Endothelial cell of umbilical vein (primary cell): ENCODE measurements at regions of chr4 and their contacts with region 1.

Region 1: DNA sequence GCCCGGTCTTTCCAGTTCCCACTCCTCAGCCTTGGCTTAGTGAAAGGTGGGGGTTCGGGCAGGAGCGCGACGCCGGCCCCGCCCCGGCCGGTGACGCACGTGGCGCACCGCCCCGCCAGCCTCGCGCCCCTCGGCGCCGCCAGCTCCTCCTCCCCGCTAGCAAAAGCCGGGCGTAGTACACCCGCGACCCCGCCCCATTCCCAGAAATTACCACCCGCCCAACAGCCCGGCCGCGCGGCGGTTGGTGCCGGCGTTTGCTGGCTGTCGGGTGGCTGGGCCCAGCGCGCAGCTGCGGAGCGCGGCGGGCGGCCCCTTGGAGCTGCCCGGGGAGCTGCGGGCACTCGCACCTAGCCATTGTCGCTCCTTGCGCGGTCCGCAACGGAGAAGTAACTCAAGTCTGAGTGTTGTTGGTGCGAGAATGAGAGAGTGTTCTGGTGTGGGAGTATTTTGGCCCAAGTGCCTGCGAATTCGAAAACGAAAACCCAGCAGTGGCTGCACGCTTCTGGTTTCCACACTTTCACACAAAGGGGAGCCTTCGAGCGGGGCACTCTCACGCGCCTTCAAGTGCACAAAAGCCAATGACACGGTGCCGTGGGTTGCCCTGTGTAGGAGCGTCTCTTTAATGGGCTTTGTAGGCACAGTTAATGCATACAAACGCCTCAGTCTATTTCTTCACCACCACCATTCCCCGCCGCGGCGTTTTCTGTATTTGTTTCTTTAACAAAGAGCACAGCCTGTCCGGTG is 1.0 kb upstream of the ELF2 start:
- DNase-seq: peak; percentile 96
- H3K4me3 ChIP-seq: peak overlapping the region; percentile 83 to 93 (median 84)
- H3K27ac ChIP-seq: peak overlapping the region; percentile 75
- H3K4me1 ChIP-seq: peaks cover 7% of the 10 kb centered on the region
- H3K27me3 ChIP-seq: no peaks in the 10 kb centered on the region
- CTCF ChIP-seq: no peak
- POLR2A ChIP-seq: peak; percentile 75

Region 2: GRCh38 chr4:138938366-138938690 is 239.7 kb before region 1 on chr4:
- CTCF ChIA-PET with region 1: no interaction called
- POLR2A ChIA-PET with region 1: no interaction called
- dilution Hi-C with region 1: no loop called
- intact Hi-C with region 1: no loop called
- DNase-seq: peak; percentile 59
- H3K4me3 ChIP-seq: no peak overlapping the region
- H3K27ac ChIP-seq: no peak overlapping the region
- H3K4me1 ChIP-seq: no peaks in the 10 kb centered on the region
- H3K27me3 ChIP-seq: no peaks in the 10 kb centered on the region
- CTCF ChIP-seq: peak in 1 of 2 donors; percentile 28
- POLR2A ChIP-seq: no peak

Region 3: GRCh38 chr4:139050446-139050845 is 127.6 kb before region 1 on chr4:
- CTCF ChIA-PET with region 1: no interaction called
- POLR2A ChIA-PET with region 1: no interaction called
- dilution Hi-C with region 1: no loop called
- intact Hi-C with region 1: no loop called
- DNase-seq: no peak
- H3K4me3 ChIP-seq: no peak overlapping the region
- H3K27ac ChIP-seq: no peak overlapping the region
- H3K4me1 ChIP-seq: peaks cover 5% of the 10 kb centered on the region
- H3K27me3 ChIP-seq: no peaks in the 10 kb centered on the region
- CTCF ChIP-seq: no peak
- POLR2A ChIP-seq: no peak

Region 4: GRCh38 chr4:139083956-139084803 is 93.9 kb before region 1 on chr4:
- CTCF ChIA-PET with region 1: no interaction called
- POLR2A ChIA-PET with region 1: interaction called, 3 read pairs
- dilution Hi-C with region 1: no loop called
- intact Hi-C with region 1: loop called (anchors 1 kb)
- DNase-seq: peak; percentile 91
- H3K4me3 ChIP-seq: peak overlapping the region; percentile 65 to 100 (median 92)
- H3K27ac ChIP-seq: peak overlapping the region; percentile 85
- H3K4me1 ChIP-seq: peaks cover 19% of the 10 kb centered on the region
- H3K27me3 ChIP-seq: no peaks in the 10 kb centered on the region
- CTCF ChIP-seq: peak in 1 of 2 donors; percentile 32
- POLR2A ChIP-seq: peak; percentile 36

Region 5: DNA sequence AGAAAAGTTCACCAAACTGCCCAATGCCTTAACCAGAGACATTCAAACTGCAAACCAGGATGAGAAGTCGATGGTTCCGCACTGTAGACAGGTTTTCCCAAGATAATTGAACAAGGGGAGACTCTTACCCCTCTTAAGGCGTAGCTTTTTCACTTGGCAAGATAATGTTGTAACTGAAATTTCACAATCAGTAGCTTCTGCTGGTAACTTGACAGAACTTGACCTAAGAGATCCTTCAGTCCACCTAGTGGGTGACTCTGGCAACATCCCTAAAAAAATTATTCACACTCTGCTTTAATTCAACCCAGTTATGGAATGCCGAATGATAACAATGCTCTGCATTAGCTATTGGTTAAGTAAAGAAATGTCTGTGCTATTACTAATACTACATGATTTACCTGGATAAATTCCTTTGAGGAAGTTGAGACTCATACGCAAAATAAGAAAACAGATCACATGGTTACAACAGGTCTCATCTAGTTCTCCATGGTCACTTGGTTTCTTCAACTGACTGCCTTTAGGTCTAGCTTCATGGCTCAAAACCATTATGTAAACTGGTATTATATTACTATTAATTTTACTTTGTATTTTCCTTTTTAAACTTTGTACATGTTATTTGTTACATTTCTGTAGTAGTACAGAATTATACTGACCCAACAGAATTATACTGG is 10.1 kb before region 1 on chr4:
- CTCF ChIA-PET with region 1: interaction called, 14 read pairs
- POLR2A ChIA-PET with region 1: no interaction called
- dilution Hi-C with region 1: no loop called
- intact Hi-C with region 1: no loop called
- DNase-seq: peak; percentile 36
- H3K4me3 ChIP-seq: no peak overlapping the region
- H3K27ac ChIP-seq: no peak overlapping the region
- H3K4me1 ChIP-seq: peaks cover 9% of the 10 kb centered on the region
- H3K27me3 ChIP-seq: no peaks in the 10 kb centered on the region
- CTCF ChIP-seq: peak in 1 of 2 donors; percentile 28
- POLR2A ChIP-seq: no peak

Region 6: GRCh38 chr4:139279760-139280620 is 102.0 kb after region 1 on chr4 and contains the start of gene MGARP:
- CTCF ChIA-PET with region 1: interaction called, 4 read pairs
- POLR2A ChIA-PET with region 1: no interaction called
- dilution Hi-C with region 1: no loop called
- intact Hi-C with region 1: loop called (anchors 1 kb)
- DNase-seq: peak; percentile 73
- H3K4me3 ChIP-seq: peak within 1 kb of the TSS; percentile 59 to 80 (median 68)
- H3K27ac ChIP-seq: no peak within 1 kb of the TSS
- H3K4me1 ChIP-seq: peaks cover 26% of the 10 kb centered on the region
- H3K27me3 ChIP-seq: no peaks in the 10 kb centered on the region
- CTCF ChIP-seq: peak in 1 of 2 donors; percentile 2
- POLR2A ChIP-seq: peak; percentile 53
- total RNA-seq, gene MGARP: 16.2 and 25.9 TPM in 2 replicates

Region 7: GRCh38 chr4:139295206-139295941 is 117.3 kb after region 1 on chr4:
- CTCF ChIA-PET with region 1: interaction called, 30 read pairs
- POLR2A ChIA-PET with region 1: interaction called, 7 read pairs
- dilution Hi-C with region 1: no loop called
- intact Hi-C with region 1: loop called (anchors 1 kb)
- DNase-seq: peak; percentile 93
- H3K4me3 ChIP-seq: peak overlapping the region; percentile 63 to 87 (median 72)
- H3K27ac ChIP-seq: peak overlapping the region; percentile 65
- H3K4me1 ChIP-seq: peaks cover 20% of the 10 kb centered on the region
- H3K27me3 ChIP-seq: no peaks in the 10 kb centered on the region
- CTCF ChIP-seq: peak; percentile 96 to 97
- POLR2A ChIP-seq: peak; percentile 83

Region 8: DNA sequence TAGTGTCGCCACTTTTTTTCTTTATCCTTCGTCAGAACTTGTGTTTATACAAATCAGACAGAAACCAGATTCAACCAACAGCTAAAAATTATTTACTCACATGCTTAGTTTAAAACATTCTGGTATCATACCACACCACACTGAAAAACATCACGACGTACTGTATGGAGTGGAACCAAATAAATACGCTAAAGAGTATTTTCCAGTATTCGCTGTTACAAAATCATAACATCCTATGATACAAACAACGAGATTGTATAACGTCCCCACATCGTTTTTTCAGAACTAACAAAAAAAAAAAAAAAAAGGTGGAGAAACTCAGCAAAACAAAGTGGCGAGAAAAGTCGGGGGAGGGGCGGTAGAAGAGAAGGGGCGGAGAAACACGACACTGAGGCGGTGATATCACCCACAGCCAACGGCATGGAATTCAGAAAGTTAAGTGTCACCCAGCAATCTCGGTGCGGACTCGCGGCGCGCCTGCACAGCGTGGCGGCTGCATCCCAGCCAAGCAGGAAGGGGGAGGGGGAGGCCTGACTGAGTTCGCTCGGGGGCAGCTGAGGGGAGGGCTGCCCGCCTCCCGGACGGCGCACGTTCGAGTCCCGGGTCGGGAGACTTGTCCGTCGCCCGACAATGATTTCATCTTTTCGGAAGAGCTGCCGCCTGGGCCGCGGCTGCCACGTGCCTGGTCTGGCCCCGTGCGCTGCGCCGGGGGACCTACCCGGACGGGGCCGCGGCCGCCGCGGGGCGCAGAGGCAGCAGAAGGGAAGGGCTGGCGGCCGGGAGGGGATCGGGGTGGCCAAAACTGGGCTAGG is 377.1 kb after region 1 on chr4:
- CTCF ChIA-PET with region 1: no interaction called
- POLR2A ChIA-PET with region 1: no interaction called
- dilution Hi-C with region 1: no loop called
- intact Hi-C with region 1: loop called (anchors 2 kb)
- DNase-seq: peak; percentile 96
- H3K4me3 ChIP-seq: peak overlapping the region; percentile 65 to 91 (median 89)
- H3K27ac ChIP-seq: peak overlapping the region; percentile 77
- H3K4me1 ChIP-seq: peaks cover 20% of the 10 kb centered on the region
- H3K27me3 ChIP-seq: peaks cover 15 to 23% of the 10 kb centered on the region in 2 experiments
- CTCF ChIP-seq: no peak
- POLR2A ChIP-seq: peak; percentile 78